ENCODE measurements at regions of chr14 and their contacts with region 1.

Region 1: DNA sequence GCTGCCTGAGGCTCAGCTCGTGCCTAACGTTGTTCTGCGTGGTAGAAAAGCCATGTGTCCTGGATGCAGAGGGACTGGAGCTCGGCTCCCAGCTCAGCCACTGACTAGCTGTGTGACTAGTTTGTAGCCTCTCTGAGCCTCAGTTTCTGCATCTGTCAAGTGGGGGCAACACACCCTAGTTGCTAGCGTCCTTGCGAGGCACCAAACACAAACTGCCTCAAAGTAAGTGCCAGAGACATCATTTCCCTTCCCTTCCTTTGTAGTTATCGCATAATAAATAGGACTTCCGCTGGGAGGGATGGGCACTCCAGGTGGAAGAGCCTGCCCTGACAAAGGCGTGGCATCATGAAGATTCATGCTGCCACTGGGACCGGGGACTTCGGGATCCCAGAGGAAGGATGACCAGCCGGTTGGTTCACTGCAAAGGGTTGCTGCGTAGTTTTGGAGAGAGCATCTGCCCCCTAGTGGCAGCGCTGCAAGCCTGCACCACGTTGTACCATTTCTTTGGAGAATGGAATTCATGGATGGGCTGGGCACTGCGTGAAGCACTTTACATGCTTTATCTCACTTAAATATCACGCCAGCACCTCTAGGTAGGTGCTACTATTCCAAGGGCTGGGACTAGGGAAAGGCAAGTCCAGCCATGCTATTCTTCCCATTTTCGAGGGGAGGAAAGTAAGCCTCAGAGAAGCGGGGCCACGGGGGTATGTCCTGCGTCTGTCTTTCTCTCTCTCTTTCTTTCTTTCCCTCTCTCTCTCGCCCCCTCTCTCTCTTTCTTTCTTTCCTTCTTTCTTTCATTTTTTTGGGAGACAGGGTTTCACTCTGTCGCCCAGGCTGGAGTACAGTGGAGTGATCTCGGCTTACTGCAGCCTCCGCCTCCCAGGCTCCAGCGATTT is 4.6 kb downstream of the CCDC197 start:
- DNase-seq: peak; percentile 42 to 83
- ATAC-seq: peak; percentile 68 to 97 (median 93)
- H3K4me3 ChIP-seq: no peak overlapping the region
- H3K4me3 Mint-ChIP-seq: no peak overlapping the region
- H3K27ac ChIP-seq: no peak overlapping the region
- H3K27ac Mint-ChIP-seq: no peak overlapping the region
- H3K4me1 ChIP-seq: peaks cover 5% of the 10 kb centered on the region
- H3K4me1 Mint-ChIP-seq: peaks cover 4 to 5% of the 10 kb centered on the region in 2 donors
- H3K27me3 ChIP-seq: peaks cover 6% of the 10 kb centered on the region
- H3K27me3 Mint-ChIP-seq: peaks cover 26 to 30% of the 10 kb centered on the region in 2 donors
- CTCF ChIP-seq: peak; percentile 96

Region 2: GRCh38 chr14:93655078-93655750 is 346.5 kb before region 1 on chr14:
- intact Hi-C with region 1: loop called (anchors 5 kb)
- DNase-seq: peak in 1 of 2 donors; percentile 26
- ATAC-seq: no peak
- H3K4me3 ChIP-seq: no peak overlapping the region
- H3K4me3 Mint-ChIP-seq: no peak overlapping the region
- H3K27ac ChIP-seq: no peak overlapping the region
- H3K27ac Mint-ChIP-seq: no peak overlapping the region
- H3K4me1 ChIP-seq: no peaks in the 10 kb centered on the region
- H3K4me1 Mint-ChIP-seq: no peaks in the 10 kb centered on the region
- H3K27me3 ChIP-seq: peaks cover 7% of the 10 kb centered on the region
- H3K27me3 Mint-ChIP-seq: peaks cover 18 to 46% of the 10 kb centered on the region in 2 donors
- CTCF ChIP-seq: peak; percentile 11

Region 3: GRCh38 chr14:93939304-93940229 is 62.2 kb before region 1 on chr14:
- intact Hi-C with region 1: loop called (anchors 1 kb)
- DNase-seq: peak; percentile 92 to 97
- ATAC-seq: peak; percentile 97 to 99 (median 97)
- H3K4me3 ChIP-seq: peak overlapping the region; percentile 8
- H3K4me3 Mint-ChIP-seq: no peak overlapping the region
- H3K27ac ChIP-seq: no peak overlapping the region
- H3K27ac Mint-ChIP-seq: peak overlapping the region in 1 of 2 donors; percentile 42
- H3K4me1 ChIP-seq: peaks cover 13% of the 10 kb centered on the region
- H3K4me1 Mint-ChIP-seq: peaks cover 0 to 5% of the 10 kb centered on the region in 2 donors
- H3K27me3 ChIP-seq: no peaks in the 10 kb centered on the region
- H3K27me3 Mint-ChIP-seq: no peaks in the 10 kb centered on the region
- CTCF ChIP-seq: peak; percentile 99

Region 4: GRCh38 chr14:93959239-93960107 is 42.3 kb before region 1 on chr14:
- intact Hi-C with region 1: loop called (anchors 5 kb)
- DNase-seq: peak; percentile 86 to 96
- ATAC-seq: peak; percentile 64 to 86 (median 80)
- H3K4me3 ChIP-seq: no peak overlapping the region
- H3K4me3 Mint-ChIP-seq: peak overlapping the region; percentile 81
- H3K27ac ChIP-seq: peak overlapping the region; percentile 81
- H3K27ac Mint-ChIP-seq: peak overlapping the region; percentile 95 to 97
- H3K4me1 ChIP-seq: peaks cover 98% of the 10 kb centered on the region
- H3K4me1 Mint-ChIP-seq: peaks cover 90 to 98% of the 10 kb centered on the region in 2 donors
- H3K27me3 ChIP-seq: no peaks in the 10 kb centered on the region
- H3K27me3 Mint-ChIP-seq: no peaks in the 10 kb centered on the region
- CTCF ChIP-seq: no peak

Region 5: DNA sequence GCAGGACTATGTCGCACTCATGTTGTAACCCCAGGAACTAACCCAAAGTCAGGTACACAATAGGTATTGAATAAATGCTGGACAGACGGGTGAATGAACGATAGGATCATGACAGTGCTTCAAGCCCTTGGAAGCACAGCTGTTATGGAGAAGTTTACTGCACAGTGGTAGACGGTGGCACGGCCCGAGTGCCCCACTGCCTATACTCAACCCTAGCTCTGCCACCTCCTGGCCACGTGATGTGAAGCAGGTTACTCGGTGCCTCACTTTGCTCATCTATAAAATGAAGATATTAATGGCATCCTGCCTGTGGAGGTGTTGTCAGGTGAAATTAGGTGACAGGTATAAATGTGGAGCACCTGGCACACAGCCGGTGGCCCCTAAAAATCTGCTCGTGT is 31.2 kb before region 1 on chr14:
- intact Hi-C with region 1: loop called (anchors 1 kb)
- DNase-seq: peak; percentile 64 to 86
- ATAC-seq: peak; percentile 90 to 94 (median 92)
- H3K4me3 ChIP-seq: peak overlapping the region; percentile 82
- H3K4me3 Mint-ChIP-seq: peak overlapping the region; percentile 92
- H3K27ac ChIP-seq: peak overlapping the region; percentile 49
- H3K27ac Mint-ChIP-seq: peak overlapping the region; percentile 76 to 92
- H3K4me1 ChIP-seq: peaks cover 57% of the 10 kb centered on the region
- H3K4me1 Mint-ChIP-seq: peaks cover 18 to 30% of the 10 kb centered on the region in 2 donors
- H3K27me3 ChIP-seq: peaks cover 3% of the 10 kb centered on the region
- H3K27me3 Mint-ChIP-seq: peaks cover 6 to 8% of the 10 kb centered on the region in 2 donors
- CTCF ChIP-seq: peak; percentile 73

Measured in natural killer cell (primary cell).